Heart left ventricle (tissue), 16 donors: ENCODE measurements at regions of chr1 and their contacts with region 1.

Region 1: DNA sequence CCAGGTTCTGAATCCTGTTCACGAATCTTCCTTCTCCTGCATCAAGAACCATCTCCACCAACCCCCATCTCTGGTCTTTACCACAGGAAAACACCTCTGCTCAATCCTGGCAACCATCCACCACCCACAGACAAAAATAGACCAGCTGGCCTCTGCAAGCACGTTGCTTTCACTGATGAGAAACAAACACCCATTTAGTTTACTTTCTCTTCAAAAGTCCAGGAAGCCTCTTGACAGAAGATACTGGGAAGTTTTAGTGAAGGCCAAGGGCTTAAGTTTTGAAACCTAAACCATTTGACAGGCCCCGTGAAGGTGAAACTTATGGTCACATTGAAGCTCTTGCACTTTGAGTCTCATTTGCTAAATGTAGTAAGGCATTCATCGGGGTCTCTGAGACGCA is 122.6 kb upstream of the PPP2R5A start:
- DNase-seq: peak in 4 of 5 donors; percentile 68 to 73 (median 70)
- ATAC-seq: peak in 3 of 4 donors; percentile 59 to 80 (median 70)
- H3K4me3 ChIP-seq: no peak overlapping the region
- H3K27ac ChIP-seq: peak overlapping the region in 11 of 12 donors; percentile 10 to 75 (median 42)
- H3K4me1 ChIP-seq: peaks cover 3 to 50% (median 30%) of the 10 kb centered on the region in 12 donors
- H3K27me3 ChIP-seq: no peaks in the 10 kb centered on the region
- CTCF ChIP-seq: no peak
- POLR2A ChIP-seq: no peak

Region 2: DNA sequence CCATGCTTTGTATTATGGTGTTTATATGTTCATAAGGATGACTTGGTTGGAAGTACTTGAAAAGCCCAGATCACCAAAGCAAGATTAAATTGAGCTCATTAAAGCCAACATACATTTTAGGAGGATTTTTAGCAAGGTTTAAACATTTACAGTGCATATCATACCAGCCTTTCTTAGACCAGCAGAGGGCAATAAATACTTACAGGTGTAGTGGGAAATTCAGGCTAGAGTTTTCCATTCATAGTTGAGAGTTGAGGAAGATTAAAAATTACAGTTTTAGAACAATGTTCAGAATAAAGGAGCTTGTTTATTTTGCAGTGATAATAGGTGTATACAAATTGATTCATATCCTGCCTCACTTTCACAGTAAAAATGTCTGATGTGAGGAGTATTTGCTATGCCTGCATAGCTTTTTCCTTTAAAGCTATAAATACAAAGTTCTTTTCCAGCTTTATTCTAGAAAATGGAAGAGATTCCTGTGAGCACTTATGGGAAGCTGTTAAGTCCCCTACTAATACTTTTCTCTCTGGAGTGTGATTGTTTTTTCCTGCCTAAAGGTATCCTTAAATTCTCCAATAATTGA is 91.8 kb before region 1 on chr1:
- intact Hi-C with region 1: loop called in 2 of 10 experiments (anchors 5 to 10 kb)
- DNase-seq: no peak
- ATAC-seq: peak in 3 of 4 donors; percentile 48 to 61 (median 57)
- H3K4me3 ChIP-seq: no peak overlapping the region
- H3K27ac ChIP-seq: peak overlapping the region in 2 of 12 donors; percentile 2 to 33
- H3K4me1 ChIP-seq: peaks cover 0 to 12% (median 0%) of the 10 kb centered on the region in 12 donors
- H3K27me3 ChIP-seq: no peaks in the 10 kb centered on the region
- CTCF ChIP-seq: peak; percentile 69 to 89 (median 80)
- POLR2A ChIP-seq: no peak

Region 3: GRCh38 chr1:212110617-212111016 is 52.0 kb before region 1 on chr1:
- intact Hi-C with region 1: loop called in 2 of 10 experiments (anchors 2 to 5 kb)
- DNase-seq: peak in 3 of 5 donors; percentile 27 to 46 (median 32)
- ATAC-seq: peak in 3 of 4 donors; percentile 50 to 69 (median 56)
- H3K4me3 ChIP-seq: no peak overlapping the region
- H3K27ac ChIP-seq: no peak overlapping the region
- H3K4me1 ChIP-seq: peaks cover 0 to 49% (median 22%) of the 10 kb centered on the region in 12 donors
- H3K27me3 ChIP-seq: no peaks in the 10 kb centered on the region
- CTCF ChIP-seq: peak in 6 of 12 donors; percentile 19 to 46 (median 24)
- POLR2A ChIP-seq: no peak

Region 4: GRCh38 chr1:212234431-212235395 is 72.1 kb after region 1 on chr1:
- intact Hi-C with region 1: loop called in 1 of 10 experiments (anchors 5 kb)
- DNase-seq: peak in 4 of 5 donors; percentile 59 to 82 (median 64)
- ATAC-seq: peak; percentile 96 to 98 (median 98)
- H3K4me3 ChIP-seq: no peak overlapping the region
- H3K27ac ChIP-seq: peak overlapping the region in 11 of 12 donors; percentile 53 to 88 (median 80)
- H3K4me1 ChIP-seq: peaks cover 3 to 57% (median 29%) of the 10 kb centered on the region in 12 donors
- H3K27me3 ChIP-seq: no peaks in the 10 kb centered on the region
- CTCF ChIP-seq: no peak
- POLR2A ChIP-seq: no peak

Region 5: DNA sequence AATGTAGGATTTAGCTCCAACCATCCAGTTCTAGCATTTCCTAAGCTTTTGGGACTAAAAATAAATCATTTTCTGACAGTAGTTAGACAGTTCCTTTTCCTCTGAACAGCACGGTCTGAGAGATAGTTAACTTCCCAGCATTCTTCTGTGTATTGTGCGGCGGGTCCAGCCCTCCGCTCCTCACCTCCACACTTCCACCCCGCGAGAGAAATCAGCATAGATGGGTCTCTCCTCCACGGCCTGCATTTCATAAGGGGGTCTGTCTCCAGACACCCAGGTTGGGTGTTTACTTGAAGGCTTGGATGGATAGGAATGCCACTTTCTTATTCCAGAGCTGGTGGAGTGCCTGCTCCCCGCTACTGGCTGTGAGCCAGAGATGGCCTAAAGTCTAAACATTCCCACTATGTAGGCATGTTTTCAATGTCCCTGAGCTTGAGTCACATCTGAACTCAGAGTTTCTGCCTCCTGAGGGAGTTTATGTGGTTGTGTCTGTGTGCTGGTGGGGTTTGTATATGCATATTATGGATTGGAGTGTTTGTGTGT is 84.6 kb after region 1 on chr1:
- intact Hi-C with region 1: loop called in 2 of 10 experiments (anchors 5 to 10 kb)
- DNase-seq: no peak
- ATAC-seq: peak in 3 of 4 donors; percentile 41 to 49 (median 48)
- H3K4me3 ChIP-seq: peak overlapping the region in 3 of 12 donors; percentile 3 to 30 (median 10)
- H3K27ac ChIP-seq: peak overlapping the region in 10 of 12 donors; percentile 8 to 64 (median 36)
- H3K4me1 ChIP-seq: peaks cover 0 to 31% (median 16%) of the 10 kb centered on the region in 12 donors
- H3K27me3 ChIP-seq: no peaks in the 10 kb centered on the region
- CTCF ChIP-seq: no peak
- POLR2A ChIP-seq: no peak